Activated CD4-positive, alpha-beta memory T cell treated with anti-CD3 and anti-CD28 coated beads, Interleukin-2, amount 10 ng/mL, durations not matched to agents 7 days and 5 days (primary cell): ENCODE measurements at regions of chr4 and their contacts with region 1.

Region 1: DNA sequence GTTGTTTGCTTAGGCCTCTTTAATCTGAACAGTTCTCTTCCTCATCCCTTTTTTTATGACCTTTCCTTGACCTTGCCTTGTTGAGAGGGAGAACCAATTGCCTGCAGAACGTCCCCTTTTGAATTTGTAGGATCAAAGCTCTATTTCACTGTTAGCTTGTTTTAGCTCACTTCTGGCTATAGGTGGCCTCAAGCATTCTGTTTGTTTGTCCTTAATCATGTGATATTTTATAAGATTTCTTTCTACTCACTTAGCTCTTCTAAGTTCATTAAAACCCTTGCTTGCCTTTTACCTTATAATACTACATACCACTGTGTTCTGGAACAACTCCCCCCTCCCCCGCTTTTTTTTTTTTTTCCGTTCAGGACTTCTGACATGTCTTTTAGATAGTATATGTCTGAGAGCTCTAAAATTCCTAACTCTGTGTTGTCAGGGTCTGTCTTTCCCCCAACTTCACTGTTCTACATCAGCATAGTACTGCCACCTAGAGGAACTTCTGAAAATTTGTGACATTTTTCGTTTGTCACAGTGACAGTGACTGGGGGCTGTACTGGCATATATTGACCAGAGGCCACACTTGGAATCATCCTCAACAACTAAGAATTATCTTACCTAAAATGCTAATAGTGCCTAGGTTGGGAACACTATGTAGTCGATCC is 128.5 kb downstream of the LARP7 start:
- DNase-seq: no peak
- H3K4me3 Mint-ChIP-seq: no peak overlapping the region
- H3K27ac Mint-ChIP-seq: no peak overlapping the region
- H3K4me1 Mint-ChIP-seq: peaks cover 2% of the 10 kb centered on the region
- H3K27me3 Mint-ChIP-seq: no peaks in the 10 kb centered on the region

Region 2: GRCh38 chr4:112636688-112637551 is 128.5 kb before region 1 on chr4 and contains the starts of genes LARP7 and ZGRF1:
- CTCF ChIA-PET with region 1: interaction called, 21 read pairs
- POLR2A ChIA-PET with region 1: no interaction called
- DNase-seq: peak; percentile 99
- H3K4me3 Mint-ChIP-seq: no peak within 1 kb of the TSS
- H3K27ac Mint-ChIP-seq: no peak within 1 kb of the TSS
- H3K4me1 Mint-ChIP-seq: peaks cover 34% of the 10 kb centered on the region
- H3K27me3 Mint-ChIP-seq: no peaks in the 10 kb centered on the region
- total RNA-seq, gene LARP7: 44.6 to 47.0 TPM
- total RNA-seq, gene ZGRF1: 28.8 to 28.9 TPM

Region 3: DNA sequence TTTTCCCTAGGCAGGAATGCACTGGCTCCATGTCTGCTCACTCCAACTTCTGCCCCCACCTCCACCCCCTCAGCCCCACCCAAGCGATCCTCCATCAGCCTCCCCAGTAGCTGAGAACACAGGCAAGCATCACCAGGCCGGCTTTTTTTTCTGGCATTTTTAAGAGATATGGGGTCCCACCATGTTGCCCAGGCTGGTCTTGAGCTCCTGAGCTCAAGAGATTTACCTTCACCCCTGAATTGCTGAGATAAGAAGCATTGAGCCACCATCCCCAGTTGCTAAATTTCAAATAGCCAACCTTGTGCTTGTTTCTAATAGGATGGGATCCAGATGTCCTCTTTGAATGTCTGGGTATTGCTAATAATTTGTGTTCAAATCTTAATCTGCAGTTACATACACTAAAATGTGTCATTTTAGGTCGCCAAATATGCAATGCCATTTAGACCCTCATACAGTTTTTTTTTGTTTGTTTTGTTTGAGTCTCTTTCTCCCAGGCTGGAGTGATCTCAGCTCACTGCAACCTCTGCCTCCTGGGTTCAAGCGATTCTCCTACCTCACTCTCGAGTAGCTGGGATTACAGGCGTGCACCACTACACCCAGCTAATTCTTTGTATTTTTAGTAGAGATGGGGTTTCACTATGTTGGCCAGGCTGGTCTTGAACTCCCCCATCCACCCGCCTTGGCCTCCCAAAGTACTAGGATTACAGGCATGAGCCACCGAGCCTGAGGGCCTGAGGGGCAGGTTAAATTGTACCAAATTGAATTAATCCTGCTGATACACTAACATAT is 119.7 kb before region 1 on chr4:
- CTCF ChIA-PET with region 1: interaction called, 11 read pairs
- POLR2A ChIA-PET with region 1: no interaction called
- DNase-seq: no peak
- H3K4me3 Mint-ChIP-seq: no peak overlapping the region
- H3K27ac Mint-ChIP-seq: no peak overlapping the region
- H3K4me1 Mint-ChIP-seq: peaks cover 20% of the 10 kb centered on the region
- H3K27me3 Mint-ChIP-seq: no peaks in the 10 kb centered on the region

Region 4: DNA sequence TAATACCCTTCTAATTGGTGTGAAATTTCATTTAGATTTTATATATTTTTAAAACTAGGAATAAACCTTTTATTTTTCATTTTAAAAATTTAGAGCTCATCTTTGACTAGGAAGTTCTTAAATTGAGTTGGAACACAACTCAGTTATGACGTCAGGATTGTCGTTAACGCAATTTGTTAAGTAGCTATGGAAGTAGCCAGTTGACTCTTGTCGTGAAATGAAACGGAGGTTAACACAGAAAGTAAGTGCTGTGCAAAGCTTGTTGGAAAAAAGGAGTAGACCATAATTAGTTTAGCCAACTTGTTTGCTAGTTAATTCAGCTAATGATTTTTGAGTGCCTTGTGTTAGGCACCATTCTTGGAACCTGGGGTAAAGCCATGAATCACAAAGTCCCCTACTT is 110.2 kb before region 1 on chr4:
- CTCF ChIA-PET with region 1: interaction called, 17 read pairs
- POLR2A ChIA-PET with region 1: no interaction called
- DNase-seq: no peak
- H3K4me3 Mint-ChIP-seq: no peak overlapping the region
- H3K27ac Mint-ChIP-seq: no peak overlapping the region
- H3K4me1 Mint-ChIP-seq: no peaks in the 10 kb centered on the region
- H3K27me3 Mint-ChIP-seq: no peaks in the 10 kb centered on the region

Region 5: DNA sequence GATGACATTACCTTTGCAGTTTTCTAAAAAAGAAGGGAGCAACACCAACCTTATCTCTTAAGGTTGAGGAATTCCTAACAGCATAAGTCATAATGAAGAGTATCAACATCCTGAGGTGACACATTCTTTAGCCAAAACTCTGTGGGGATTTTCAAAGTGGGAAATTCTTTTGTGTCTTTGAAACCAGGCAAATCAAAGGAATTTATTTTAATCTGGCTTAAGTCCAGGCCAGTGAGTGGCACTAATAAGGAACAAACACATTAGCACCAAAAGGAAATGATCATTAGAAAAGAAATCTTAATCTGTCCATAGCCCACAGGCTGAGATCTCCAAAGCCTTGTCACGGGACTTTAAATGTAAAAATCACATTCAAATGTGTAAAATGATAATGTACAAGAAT is 18.4 kb before region 1 on chr4:
- CTCF ChIA-PET with region 1: interaction called, 16 read pairs
- POLR2A ChIA-PET with region 1: no interaction called
- DNase-seq: no peak
- H3K4me3 Mint-ChIP-seq: no peak overlapping the region
- H3K27ac Mint-ChIP-seq: no peak overlapping the region
- H3K4me1 Mint-ChIP-seq: no peaks in the 10 kb centered on the region
- H3K27me3 Mint-ChIP-seq: peaks cover 7% of the 10 kb centered on the region

Region 6: GRCh38 chr4:112775801-112776200 is 10.4 kb after region 1 on chr4:
- CTCF ChIA-PET with region 1: interaction called, 16 read pairs
- POLR2A ChIA-PET with region 1: no interaction called
- DNase-seq: no peak
- H3K4me3 Mint-ChIP-seq: no peak overlapping the region
- H3K27ac Mint-ChIP-seq: no peak overlapping the region
- H3K4me1 Mint-ChIP-seq: no peaks in the 10 kb centered on the region
- H3K27me3 Mint-ChIP-seq: peaks cover 4% of the 10 kb centered on the region

Region 7: GRCh38 chr4:112848911-112849310 is 83.5 kb after region 1 on chr4:
- CTCF ChIA-PET with region 1: no interaction called
- POLR2A ChIA-PET with region 1: no interaction called
- DNase-seq: no peak
- H3K4me3 Mint-ChIP-seq: no peak overlapping the region
- H3K27ac Mint-ChIP-seq: no peak overlapping the region
- H3K4me1 Mint-ChIP-seq: no peaks in the 10 kb centered on the region
- H3K27me3 Mint-ChIP-seq: peaks cover under 1% of the 10 kb centered on the region

Region 8: DNA sequence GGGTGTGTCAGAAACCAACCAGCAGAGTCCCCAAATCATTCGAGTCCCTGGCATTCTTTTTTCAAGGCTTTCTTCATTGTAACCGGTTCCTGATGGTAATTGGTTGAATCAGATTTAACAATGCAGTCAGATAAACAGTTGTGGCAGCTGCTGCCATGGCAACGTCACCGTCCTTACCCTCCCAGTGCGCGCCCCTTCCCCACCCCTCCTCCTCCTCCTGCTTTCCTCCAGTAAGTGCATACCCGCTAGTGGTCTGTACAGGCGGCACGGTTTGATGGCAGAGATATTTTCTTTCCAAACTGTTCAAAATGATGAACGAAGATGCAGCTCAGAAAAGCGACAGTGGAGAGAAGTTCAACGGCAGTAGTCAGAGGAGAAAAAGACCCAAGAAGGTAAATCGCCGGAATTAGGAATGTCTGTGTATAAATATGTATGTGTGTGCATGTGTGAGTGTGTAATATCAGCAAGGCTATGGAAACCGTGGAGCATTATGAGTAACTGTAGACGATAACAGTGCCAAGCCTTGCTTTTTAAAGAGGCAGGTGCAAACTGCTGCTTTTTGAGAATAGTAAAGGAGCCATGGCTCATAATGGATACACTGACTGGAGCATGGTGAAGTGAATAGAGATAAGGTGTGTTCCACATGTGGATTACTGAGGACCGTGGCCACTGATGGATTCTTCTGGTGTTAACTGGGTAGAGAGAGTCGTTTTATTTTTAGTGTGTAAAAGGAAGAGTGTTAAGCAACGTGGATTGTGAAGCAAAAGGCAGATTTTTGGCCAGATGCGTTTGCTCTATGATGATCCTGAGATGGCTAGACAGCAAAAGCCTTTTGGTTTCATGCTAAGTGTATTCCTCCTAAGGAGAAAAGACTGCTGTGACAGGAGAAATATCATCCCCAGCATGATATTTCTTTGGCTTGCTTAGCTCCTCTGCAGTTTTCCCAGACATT is 284.3 kb after region 1 on chr4 and contains the start of gene ANK2:
- CTCF ChIA-PET with region 1: no interaction called
- POLR2A ChIA-PET with region 1: no interaction called
- DNase-seq: no peak
- H3K4me3 Mint-ChIP-seq: no peak within 1 kb of the TSS
- H3K27ac Mint-ChIP-seq: no peak within 1 kb of the TSS
- H3K4me1 Mint-ChIP-seq: peaks cover 3% of the 10 kb centered on the region
- H3K27me3 Mint-ChIP-seq: peaks cover 2% of the 10 kb centered on the region
- total RNA-seq, gene ANK2: 1.5 to 1.9 TPM

Region 9: DNA sequence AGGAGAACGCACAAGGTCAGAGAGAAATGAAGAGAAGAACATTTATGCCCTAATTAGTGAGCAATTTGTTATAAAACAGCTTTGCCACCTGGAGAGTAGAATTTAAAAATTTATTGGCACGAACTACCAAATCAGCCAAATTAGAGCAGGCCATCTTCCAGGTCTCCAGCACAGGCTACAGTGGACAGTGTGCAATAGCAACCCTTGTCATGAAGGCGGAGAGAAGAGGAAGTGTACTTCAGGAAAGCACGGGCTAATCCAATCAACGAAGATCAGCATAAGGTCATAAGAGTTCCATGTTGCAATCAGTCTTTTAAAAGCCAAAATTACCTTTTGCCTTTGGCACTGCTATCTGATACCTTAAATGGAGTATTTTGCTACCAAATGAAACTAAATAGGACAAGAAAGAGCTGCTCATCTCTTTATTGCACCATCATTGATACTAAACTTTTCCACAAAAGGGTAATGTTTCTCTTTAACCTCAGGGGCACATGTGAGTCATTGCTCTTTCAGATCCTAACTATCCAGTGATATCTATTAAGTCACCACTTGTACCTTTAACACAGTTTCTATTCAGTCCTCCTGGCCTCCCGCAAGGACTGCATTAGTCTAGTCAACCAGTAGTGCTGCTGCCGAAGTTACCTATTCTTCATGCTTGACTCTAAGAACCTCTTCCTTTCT is 303.9 kb after region 1 on chr4:
- CTCF ChIA-PET with region 1: no interaction called
- POLR2A ChIA-PET with region 1: no interaction called
- DNase-seq: no peak
- H3K4me3 Mint-ChIP-seq: no peak overlapping the region
- H3K27ac Mint-ChIP-seq: no peak overlapping the region
- H3K4me1 Mint-ChIP-seq: no peaks in the 10 kb centered on the region
- H3K27me3 Mint-ChIP-seq: peaks cover 3% of the 10 kb centered on the region